ENCODE measurements at regions of chr6 and their contacts with region 1.

Region 1: DNA sequence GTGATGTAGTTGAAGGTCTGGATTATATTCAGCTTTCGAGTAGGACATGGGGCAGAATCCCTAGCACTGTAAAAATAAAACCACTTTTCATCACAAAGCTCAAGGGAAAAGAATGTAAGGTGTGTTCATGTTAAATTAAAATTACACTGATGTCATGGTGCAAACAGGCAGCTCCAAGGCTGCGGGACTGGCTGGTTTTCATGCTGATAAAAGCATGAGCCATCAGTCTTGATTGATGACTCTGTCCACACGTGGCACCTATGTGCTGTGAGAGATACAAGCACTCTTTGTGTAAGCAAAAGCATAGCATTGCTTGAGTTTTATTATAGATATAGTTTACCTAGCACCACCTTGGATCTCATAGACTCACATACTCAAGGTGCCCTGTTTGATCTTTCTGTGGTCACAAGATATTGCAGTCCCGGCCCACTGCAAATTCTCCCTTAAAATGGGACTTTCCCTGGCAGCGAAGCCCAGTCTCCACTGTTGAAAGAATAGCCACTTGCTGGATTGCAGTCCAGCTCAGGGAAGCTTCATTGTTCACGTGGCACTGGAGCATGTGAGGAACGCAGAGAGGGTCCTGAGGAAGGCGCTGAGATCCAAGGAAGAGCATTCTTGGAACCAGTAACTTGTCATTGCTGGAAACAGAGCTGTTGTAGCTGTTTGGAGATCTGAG is 90.6 kb downstream of the TIAM2 start:
- DNase-seq: peak; percentile 77
- ATAC-seq: peak; percentile 64
- H3K4me3 ChIP-seq: no peak overlapping the region
- H3K27ac ChIP-seq: no peak overlapping the region
- H3K4me1 ChIP-seq: peaks cover 18% of the 10 kb centered on the region
- H3K27me3 ChIP-seq: no peaks in the 10 kb centered on the region; a peak in 1 of 5 replicates
- CTCF ChIP-seq: no peak
- EP300 ChIP-seq: no peak
- POLR2A ChIP-seq: no peak
- RAD21 ChIP-seq: no peak

Region 2: DNA sequence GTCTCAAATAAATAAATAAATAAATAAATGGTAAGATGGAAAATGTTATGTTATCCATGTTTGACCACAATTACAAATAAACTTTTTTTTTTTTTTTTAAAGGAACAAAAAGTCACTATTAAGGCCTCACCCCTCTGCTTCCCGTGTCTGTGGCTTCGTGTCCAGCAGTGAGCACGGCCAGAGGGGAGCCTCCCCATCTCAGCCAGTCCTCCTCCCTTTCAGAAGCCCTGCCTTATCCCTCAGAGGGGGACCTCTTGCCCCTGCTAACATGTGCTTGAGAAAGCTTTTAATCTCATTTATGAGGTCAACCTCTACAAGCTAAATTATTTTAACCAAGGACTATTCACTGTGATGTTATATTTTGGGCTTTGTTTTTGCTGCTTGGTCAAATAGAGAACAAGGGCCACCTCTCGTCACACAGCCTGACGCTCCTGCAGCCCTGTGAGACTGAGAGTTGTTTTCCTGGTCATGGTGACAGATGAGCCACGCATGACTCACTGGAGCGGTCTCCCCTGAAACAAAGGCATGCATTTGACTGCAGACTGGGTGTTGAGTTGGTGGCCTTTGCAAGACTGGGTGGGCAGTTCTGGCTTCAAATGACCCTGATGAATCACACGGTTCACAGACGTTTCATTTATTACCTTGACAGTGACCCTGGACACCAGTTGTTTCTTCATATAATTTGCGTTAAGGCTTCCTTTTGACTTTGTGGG is 41.2 kb after region 1 on chr6:
- CTCF ChIA-PET with region 1: no interaction called
- POLR2A ChIA-PET with region 1: no interaction called
- in situ Hi-C with region 1: no loop called
- intact Hi-C with region 1: loop called (anchors 5 kb)
- DNase-seq: peak; percentile 93
- ATAC-seq: peak; percentile 89
- H3K4me3 ChIP-seq: no peak overlapping the region
- H3K27ac ChIP-seq: no peak overlapping the region
- H3K4me1 ChIP-seq: peaks cover 26% of the 10 kb centered on the region
- H3K27me3 ChIP-seq: no peaks in the 10 kb centered on the region
- CTCF ChIP-seq: no peak
- EP300 ChIP-seq: peak; percentile 13 to 34; a peak in 1 of 4 replicates
- POLR2A ChIP-seq: no peak
- RAD21 ChIP-seq: no peak

Region 3: DNA sequence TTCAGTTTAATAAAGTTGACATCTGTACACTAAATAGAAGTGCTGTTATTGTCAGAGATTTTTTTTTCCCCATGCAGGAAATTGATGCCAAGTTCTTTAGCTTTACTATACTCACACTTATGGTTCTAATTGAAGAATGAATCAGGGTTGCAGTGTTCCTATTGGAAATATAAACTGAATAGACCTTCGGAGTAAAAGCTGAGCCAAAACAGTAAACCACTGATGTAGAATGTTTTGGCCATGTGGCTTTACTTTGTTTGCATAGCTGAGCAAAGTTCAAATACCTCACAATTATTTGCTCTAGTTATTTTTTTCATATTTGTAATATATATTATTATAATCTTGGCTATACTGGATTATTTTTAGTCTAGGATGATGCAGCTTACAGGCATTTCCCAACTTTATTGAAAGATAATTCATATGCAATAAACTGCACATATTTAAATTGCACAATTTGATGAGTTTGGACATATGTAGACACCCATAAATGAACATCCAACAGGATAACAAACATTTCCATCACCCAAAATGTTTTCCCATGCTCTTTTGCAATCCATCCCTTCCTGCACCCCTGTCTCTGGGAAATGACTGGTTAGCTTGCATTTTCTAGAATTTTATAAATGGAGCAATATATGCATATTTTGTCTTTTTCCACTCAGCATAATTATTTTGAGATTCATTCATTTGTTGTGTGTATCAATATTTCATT is 475.7 kb after region 1 on chr6:
- CTCF ChIA-PET with region 1: no interaction called
- POLR2A ChIA-PET with region 1: no interaction called
- in situ Hi-C with region 1: no loop called
- intact Hi-C with region 1: no loop called
- DNase-seq: peak; percentile 58
- ATAC-seq: peak; percentile 68
- H3K4me3 ChIP-seq: peak overlapping the region in 2 of 3 experiments; percentile 11 to 14; a peak in 2 of 6 replicates
- H3K27ac ChIP-seq: no peak overlapping the region
- H3K4me1 ChIP-seq: peaks cover 16% of the 10 kb centered on the region
- H3K27me3 ChIP-seq: no peaks in the 10 kb centered on the region
- CTCF ChIP-seq: no peak
- EP300 ChIP-seq: no peak
- POLR2A ChIP-seq: no peak
- RAD21 ChIP-seq: no peak

Measured in HepG2 (cell line).